Naive thymus-derived CD4-positive, alpha-beta T cell (primary cell): ENCODE measurements at regions of chr6 and their contacts with region 1.

Region 1: DNA sequence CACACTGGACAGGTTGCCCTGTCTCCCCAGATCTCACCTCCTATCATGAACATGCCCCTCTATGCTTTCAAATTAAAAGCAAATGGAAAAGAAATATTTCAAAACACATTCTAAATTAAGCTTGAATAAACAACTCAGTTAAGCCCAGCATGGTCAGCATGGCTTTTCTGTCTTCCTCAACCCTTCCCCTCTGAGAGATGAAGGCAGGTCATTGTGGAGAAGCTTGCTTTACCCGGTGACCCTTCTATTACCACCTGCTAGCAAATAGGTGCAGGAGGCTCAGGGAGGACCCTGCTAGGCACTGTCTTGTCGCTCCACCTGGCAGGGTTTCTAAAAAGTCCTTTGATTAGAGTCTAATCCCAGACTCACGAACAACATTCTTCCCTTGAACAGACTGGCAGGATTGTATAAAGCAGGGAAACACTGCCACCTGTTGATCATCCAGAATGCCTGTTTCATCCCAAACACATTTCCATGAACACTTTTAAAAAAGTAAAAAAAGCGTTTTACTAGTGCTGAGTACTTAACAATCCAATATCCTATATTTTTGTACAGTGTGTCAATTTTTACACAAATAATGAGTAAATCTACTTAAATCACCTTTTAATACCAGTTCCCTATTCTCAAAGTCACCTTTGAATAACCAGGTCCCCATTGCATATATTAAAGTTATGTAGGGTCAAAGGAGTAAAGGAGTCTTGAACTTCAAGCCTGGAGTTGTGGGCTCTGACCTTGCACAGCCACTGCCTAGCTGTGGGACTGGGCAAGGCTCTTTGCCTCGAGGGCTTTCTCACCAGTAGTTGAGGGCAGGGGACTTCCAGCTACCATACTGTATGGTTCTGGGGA is 75.5 kb downstream of the GPR6 start:
- DNase-seq: peak in 4 of 9 donors; percentile 9 to 27 (median 14)
- ATAC-seq: peak; percentile 45
- H3K4me3 ChIP-seq: no peak overlapping the region
- H3K4me3 Mint-ChIP-seq: no peak overlapping the region
- H3K27ac ChIP-seq: no peak overlapping the region
- H3K27ac Mint-ChIP-seq: no peak overlapping the region
- H3K4me1 ChIP-seq: no peaks in the 10 kb centered on the region
- H3K4me1 Mint-ChIP-seq: no peaks in the 10 kb centered on the region
- H3K27me3 ChIP-seq: no peaks in the 10 kb centered on the region
- H3K27me3 Mint-ChIP-seq: peaks cover 0 to 25% (median 16%) of the 10 kb centered on the region in 5 donors

Region 2: GRCh38 chr6:109705258-109705657 is 348.4 kb before region 1 on chr6:
- CTCF ChIA-PET with region 1: no interaction called
- POLR2A ChIA-PET with region 1: no interaction called
- intact Hi-C with region 1: loop called in 1 of 2 experiments (anchors 1 kb)
- DNase-seq: peak; percentile 46 to 74 (median 61)
- ATAC-seq: peak; percentile 99
- H3K4me3 ChIP-seq: no peak overlapping the region
- H3K4me3 Mint-ChIP-seq: no peak overlapping the region
- H3K27ac ChIP-seq: no peak overlapping the region
- H3K27ac Mint-ChIP-seq: no peak overlapping the region
- H3K4me1 ChIP-seq: no peaks in the 10 kb centered on the region
- H3K4me1 Mint-ChIP-seq: peaks cover 7 to 62% (median 38%) of the 10 kb centered on the region in 7 donors
- H3K27me3 ChIP-seq: no peaks in the 10 kb centered on the region
- H3K27me3 Mint-ChIP-seq: no peaks in the 10 kb centered on the region

Region 3: GRCh38 chr6:110415086-110415916 is 361.7 kb after region 1 on chr6 and contains the start of gene DDO:
- CTCF ChIA-PET with region 1: no interaction called
- POLR2A ChIA-PET with region 1: no interaction called
- intact Hi-C with region 1: no loop called
- DNase-seq: no peak
- ATAC-seq: peak; percentile 86
- H3K4me3 ChIP-seq: no peak within 1 kb of the TSS
- H3K4me3 Mint-ChIP-seq: peak within 1 kb of the TSS in 4 of 10 donors; percentile 35 to 62 (median 58)
- H3K27ac ChIP-seq: no peak within 1 kb of the TSS
- H3K27ac Mint-ChIP-seq: peak within 1 kb of the TSS in 1 of 9 donors; percentile 16
- H3K4me1 ChIP-seq: no peaks in the 10 kb centered on the region
- H3K4me1 Mint-ChIP-seq: peaks cover 0 to 10% (median 0%) of the 10 kb centered on the region in 7 donors
- H3K27me3 ChIP-seq: peaks cover 0 to 3% of the 10 kb centered on the region in 2 donors
- H3K27me3 Mint-ChIP-seq: peaks cover 0 to 19% (median 7%) of the 10 kb centered on the region in 5 donors
- total RNA-seq, gene DDO: 0.47 TPM in 1 of 5 experiments, not detected in the others